ENCODE measurements at regions of chr17 and their contacts with region 1.

Region 1: GRCh38 chr17:72151565-72152391 is 31.0 kb downstream of the SOX9 start:
- DNase-seq: peak; percentile 86 to 99
- H3K4me3 ChIP-seq: peak overlapping the region; percentile 38; the same call in 1 of the 2 replicates
- H3K27ac ChIP-seq: peak overlapping the region; percentile 92
- H3K4me1 ChIP-seq: peaks cover 36% of the 10 kb centered on the region
- H3K27me3 ChIP-seq: no peaks in the 10 kb centered on the region
- CTCF ChIP-seq: no peak

Region 2: DNA sequence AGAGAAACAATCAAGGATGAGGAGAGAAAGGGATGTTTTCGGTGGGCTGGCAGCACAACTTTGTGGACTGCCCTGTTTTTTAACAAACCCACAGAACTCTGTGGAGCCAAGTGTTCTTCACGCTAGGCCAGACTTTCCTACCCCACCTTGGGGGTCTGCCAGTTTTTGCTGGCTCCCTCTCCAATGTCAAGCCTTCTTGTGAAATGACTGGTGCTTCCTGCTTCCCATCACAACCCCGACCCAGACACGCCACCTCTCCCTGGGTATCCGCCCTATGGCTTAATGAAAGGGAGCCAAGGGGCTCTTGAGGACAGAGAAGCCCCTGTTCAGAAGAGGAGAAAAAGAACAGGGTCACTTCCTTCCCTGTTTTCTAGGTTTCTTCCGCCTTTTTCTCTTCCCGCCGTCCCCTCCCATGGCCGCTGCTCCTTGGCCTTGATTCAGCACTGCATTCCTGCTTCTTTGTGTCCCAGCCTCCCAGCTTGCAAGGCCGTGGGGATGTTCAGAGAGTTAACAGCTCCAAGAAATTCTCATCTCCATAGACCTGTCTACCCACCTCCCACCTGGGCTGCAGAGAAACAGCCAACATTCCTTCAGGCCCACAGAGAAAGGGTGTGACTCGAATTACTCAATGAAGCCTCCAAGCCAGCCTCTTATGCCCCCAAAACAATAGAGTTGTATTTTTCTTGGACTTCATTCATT is 47.5 kb before region 1 on chr17:
- CTCF ChIA-PET with region 1: no interaction called
- POLR2A ChIA-PET with region 1: no interaction called
- intact Hi-C with region 1: no loop called
- DNase-seq: peak in 1 of 2 experiments; percentile 63
- H3K4me3 ChIP-seq: no peak overlapping the region
- H3K27ac ChIP-seq: no peak overlapping the region
- H3K4me1 ChIP-seq: peaks cover 12% of the 10 kb centered on the region
- H3K27me3 ChIP-seq: no peaks in the 10 kb centered on the region
- CTCF ChIP-seq: no peak

Region 3: DNA sequence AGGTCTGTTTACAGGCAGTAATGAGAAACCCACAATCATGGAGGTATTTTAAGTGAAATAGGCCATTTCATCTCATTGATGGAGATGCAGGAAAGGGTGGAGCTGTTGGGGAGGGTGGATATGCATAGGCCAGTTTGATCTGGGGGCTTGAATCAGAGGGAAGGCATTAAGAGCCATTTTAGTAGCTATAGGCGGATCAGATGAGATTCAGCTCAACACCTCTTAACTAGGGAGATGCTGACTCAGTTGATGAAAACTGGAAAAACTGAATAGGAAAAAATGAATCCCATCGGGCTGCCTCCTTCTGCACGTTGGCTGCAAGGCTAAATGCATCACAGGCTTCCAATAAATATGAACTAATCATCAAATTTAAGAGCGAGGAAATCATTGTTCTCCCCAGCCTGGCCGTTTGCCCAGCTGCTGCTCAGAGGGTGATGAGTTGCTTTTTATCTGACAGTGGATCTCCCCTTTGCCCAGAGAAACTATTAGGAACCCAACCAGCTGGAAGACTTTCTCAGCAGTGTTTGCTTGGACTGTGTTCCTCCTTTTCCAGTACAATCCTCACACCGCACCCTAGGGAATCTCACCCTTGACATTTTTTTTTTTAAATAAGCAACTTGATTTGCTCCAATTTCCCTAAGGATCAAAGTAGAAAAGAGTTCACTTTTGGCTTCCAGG is 118.6 kb after region 1 on chr17:
- CTCF ChIA-PET with region 1: interaction called, 3 read pairs
- POLR2A ChIA-PET with region 1: no interaction called
- intact Hi-C with region 1: loop called (anchors 5 kb)
- DNase-seq: peak; percentile 62 to 82
- H3K4me3 ChIP-seq: no peak overlapping the region
- H3K27ac ChIP-seq: 0 out of 2 replicates have a peak overlapping the region, but pooled peaks have one; percentile 13
- H3K4me1 ChIP-seq: peaks cover 35% of the 10 kb centered on the region
- H3K27me3 ChIP-seq: no peaks in the 10 kb centered on the region
- CTCF ChIP-seq: no peak

Measured in PC-9 (cell line).